ENCODE measurements at regions of chr3 and their contacts with region 1.

Region 1: DNA sequence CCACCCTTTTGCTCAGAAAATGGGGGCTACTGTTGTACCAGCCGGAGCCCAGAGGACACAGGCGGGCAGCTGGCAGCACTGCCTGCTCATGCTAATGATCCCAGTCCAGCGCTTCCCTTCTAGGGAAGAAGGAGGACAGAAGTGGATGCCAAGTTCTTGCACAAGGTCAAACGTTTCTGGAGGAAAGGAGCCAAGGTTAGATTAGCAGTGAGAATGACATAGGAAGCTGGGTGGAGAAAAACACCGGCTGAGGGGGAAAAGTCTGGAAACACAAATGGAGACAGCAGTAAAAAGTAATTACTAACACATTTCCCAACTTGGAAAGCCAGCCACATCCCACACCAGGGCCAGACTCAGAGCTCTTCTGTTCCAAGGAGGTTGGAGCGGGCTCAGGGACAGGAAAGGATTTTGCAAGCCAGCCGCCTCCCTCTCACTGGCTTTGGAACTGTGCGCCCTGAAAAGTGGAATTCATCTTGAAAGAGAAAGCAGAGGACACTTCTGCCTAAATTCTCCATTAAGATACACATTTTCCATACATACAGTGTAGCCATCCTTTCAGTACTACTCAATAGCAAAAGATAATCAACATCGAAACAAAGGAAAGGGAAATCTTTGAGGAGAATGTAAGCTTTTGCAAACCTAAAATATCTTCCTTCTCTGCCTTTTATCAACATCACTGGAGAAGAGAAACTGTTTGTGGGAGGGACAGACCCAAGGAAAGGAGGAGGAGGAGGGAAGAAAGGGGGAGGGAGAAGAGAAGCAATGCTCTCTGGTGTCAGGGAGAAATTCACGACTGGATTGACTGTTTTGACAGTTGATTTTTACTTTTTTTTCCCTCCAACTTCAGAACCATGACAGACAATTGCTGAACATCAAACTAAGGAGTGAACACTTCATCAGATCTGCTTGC is 133.6 kb downstream of the CD47 start:
- DNase-seq: peak; percentile 96
- H3K4me3 ChIP-seq: peak overlapping the region in 3 of 4 donors; percentile 18 to 40 (median 33)
- H3K27ac ChIP-seq: peak overlapping the region; percentile 74 to 86 (median 81)
- H3K4me1 ChIP-seq: peaks cover 0 to 29% (median 19%) of the 10 kb centered on the region in 4 donors
- H3K27me3 ChIP-seq: no peaks in the 10 kb centered on the region
- CTCF ChIP-seq: no peak
- EP300 ChIP-seq: peak in 1 of 4 donors; percentile 41
- POLR2A ChIP-seq: no peak

Region 2: DNA sequence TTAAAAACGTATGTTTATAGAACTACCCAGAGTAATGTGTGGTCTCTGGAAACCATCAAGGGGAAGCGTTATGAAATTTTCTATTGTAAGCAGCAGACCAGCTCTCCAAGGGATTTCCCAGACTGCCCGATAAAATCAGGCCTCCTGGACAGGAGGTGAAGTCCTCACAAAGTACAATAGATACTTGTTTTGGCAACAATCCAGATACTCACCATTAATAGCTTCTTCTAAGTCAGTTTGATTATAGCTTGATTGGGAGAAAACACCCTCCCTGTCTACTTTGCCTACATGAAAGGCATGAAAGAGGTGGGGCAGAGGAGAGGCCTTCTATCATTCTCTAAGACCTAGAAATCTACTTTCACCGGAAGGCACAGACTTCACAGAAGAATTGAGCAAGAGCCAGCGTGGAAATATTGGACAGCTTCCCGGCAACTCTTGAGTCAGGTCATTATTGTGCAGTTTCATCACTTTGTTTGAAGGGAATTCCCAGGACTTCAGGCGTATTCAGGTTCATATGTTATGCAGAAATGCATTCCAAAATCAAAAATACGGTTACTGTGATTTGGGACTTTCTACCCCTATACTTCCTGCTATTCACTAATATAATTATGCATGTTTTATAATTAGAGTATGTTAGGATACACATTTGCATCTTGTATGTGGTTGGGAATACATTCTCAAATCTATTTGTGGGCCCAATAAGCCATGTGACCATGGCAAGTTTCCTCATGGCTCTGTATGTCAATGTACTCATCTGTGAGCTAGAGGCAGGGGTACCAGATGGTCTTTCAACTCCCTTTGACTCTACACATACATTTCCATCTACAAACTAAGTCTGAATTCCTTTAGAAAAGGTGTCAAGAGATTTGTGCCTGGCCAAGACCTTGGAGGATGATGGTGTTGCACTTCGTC is 30.0 kb after region 1 on chr3:
- intact Hi-C with region 1: loop called (anchors 1 kb)
- DNase-seq: peak; percentile 94
- H3K4me3 ChIP-seq: no peak overlapping the region
- H3K27ac ChIP-seq: peak overlapping the region; percentile 71 to 78 (median 76)
- H3K4me1 ChIP-seq: peaks cover 0 to 38% (median 32%) of the 10 kb centered on the region in 4 donors
- H3K27me3 ChIP-seq: no peaks in the 10 kb centered on the region
- CTCF ChIP-seq: no peak
- EP300 ChIP-seq: peak in 1 of 4 donors; percentile 41
- POLR2A ChIP-seq: no peak

Region 3: GRCh38 chr3:108090701-108091451 is 133.6 kb after region 1 on chr3 and contains the start of gene CD47:
- intact Hi-C with region 1: loop called (anchors 5 kb)
- DNase-seq: peak; percentile 97
- H3K4me3 ChIP-seq: peak within 1 kb of the TSS; percentile 75 to 99 (median 93)
- H3K27ac ChIP-seq: peak within 1 kb of the TSS; percentile 88 to 95 (median 92)
- H3K4me1 ChIP-seq: peaks cover 0 to 34% (median 4%) of the 10 kb centered on the region in 4 donors
- H3K27me3 ChIP-seq: no peaks in the 10 kb centered on the region
- CTCF ChIP-seq: no peak
- EP300 ChIP-seq: no peak
- POLR2A ChIP-seq: peak in 1 of 2 donors; percentile 49
- total RNA-seq, gene CD47: 52.1 to 67.1 (median 62.0) TPM

Region 4: DNA sequence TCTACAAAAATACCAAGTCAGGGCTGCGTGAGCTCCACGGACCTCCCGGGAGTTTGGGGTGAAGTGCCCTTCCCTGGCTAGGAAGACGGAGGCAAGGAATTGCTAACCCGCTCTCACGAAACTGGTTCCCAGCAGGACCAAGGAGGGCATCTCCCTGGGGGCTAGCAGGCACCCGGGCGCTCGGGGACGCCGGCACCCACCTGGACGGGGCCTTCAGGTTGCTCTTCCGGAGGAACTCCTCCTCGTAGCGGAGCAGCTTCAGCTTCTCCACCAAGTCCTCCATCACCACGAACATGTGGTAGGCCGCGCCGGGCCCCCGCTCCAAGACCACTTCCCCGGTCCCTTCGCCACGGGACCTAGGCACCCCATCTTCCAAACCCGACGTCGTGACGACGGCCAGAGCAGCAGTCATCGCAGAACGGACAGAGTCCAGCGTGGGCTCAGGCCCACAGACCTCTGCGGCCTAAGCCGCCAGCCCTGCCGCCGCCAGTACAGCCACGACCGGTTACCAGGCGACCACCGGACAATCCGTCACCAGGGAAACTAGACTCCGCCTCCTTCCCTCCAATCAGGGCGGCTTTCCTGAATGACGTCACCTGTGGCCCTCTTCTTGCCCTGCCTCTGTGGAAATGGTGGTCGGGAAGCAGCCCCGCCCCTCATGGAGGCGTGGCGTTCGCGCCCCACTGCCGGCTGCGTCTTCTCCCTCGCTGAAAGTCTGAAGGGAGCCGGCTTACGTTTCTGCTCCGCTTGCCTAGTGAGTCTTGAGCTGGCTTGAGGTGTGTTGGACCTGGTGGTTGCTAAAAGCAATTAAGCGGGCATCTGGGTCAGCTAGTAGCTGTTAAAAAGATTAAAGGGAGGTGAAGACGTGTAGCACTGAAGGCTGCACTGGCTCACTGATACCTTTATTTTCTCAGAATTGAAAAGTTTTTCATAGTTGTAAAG is 264.9 kb after region 1 on chr3 and contains the start of gene IFT57:
- intact Hi-C with region 1: loop called (anchors 5 kb)
- DNase-seq: peak; percentile 99
- H3K4me3 ChIP-seq: peak within 1 kb of the TSS; percentile 78 to 86 (median 82)
- H3K27ac ChIP-seq: peak within 1 kb of the TSS; percentile 80 to 84 (median 82)
- H3K4me1 ChIP-seq: peaks cover 0 to 33% (median 19%) of the 10 kb centered on the region in 4 donors
- H3K27me3 ChIP-seq: no peaks in the 10 kb centered on the region
- CTCF ChIP-seq: no peak
- EP300 ChIP-seq: no peak
- POLR2A ChIP-seq: peak; percentile 26 to 57
- total RNA-seq, gene IFT57: 38.8 to 49.6 (median 44.0) TPM